Activated CD4-positive, alpha-beta memory T cell treated with anti-CD3 and anti-CD28 coated beads, Interleukin-2, amount 10 ng/mL, durations not matched to agents 7 days and 5 days (primary cell): ENCODE measurements at regions of chr17 and their contacts with region 1.

Region 1: DNA sequence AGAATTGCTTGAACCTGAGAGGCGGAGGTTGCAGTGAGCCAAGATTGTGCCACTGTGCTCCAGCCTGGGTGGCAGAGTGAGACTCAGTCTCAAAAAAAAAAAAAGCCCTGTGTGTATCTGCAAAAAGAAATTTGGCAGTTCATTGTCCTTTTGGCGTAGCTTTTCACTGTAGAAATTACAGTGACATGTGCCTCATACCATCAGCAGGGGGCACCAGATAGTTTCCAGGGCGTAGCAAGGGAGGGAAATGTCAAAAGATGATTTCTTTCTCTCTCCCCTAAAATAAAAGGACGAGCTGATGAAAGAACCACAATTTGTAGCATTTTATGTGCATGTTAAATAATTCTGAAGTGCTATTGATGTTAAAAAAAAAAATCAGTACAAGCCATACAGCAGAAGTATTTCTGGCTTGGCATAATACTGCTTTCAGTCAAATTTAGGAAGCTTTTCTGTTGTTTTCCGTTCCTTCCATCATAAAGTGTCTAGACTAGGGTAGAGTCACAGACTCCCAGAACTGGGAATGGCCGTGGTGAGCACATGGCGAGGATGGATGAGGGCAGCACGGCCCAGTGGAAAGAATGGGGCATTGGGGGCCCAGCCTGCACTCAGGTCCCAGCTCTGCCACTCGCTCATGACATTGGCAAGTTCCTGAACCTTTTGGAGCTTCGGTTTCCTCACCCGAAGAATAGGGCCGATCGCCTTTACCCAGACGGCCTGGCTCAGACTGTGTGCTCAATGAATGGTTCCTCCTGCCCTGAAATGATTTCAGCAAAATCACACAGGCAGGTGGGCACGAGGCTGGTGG is 59.8 kb upstream of the RPH3AL start:
- DNase-seq: peak; percentile 76
- H3K4me3 Mint-ChIP-seq: peak overlapping the region; percentile 80
- H3K27ac Mint-ChIP-seq: peak overlapping the region; percentile 85
- H3K4me1 Mint-ChIP-seq: peaks cover 79% of the 10 kb centered on the region
- H3K27me3 Mint-ChIP-seq: peaks cover 3% of the 10 kb centered on the region

Region 2: GRCh38 chr17:688100-688989 is 275.9 kb after region 1 on chr17:
- CTCF ChIA-PET with region 1: interaction called, 16 read pairs
- POLR2A ChIA-PET with region 1: interaction called, 5 read pairs
- DNase-seq: no peak
- H3K4me3 Mint-ChIP-seq: no peak overlapping the region
- H3K27ac Mint-ChIP-seq: no peak overlapping the region
- H3K4me1 Mint-ChIP-seq: no peaks in the 10 kb centered on the region
- H3K27me3 Mint-ChIP-seq: no peaks in the 10 kb centered on the region

Region 3: GRCh38 chr17:716238-716637 is 303.8 kb after region 1 on chr17:
- CTCF ChIA-PET with region 1: interaction called, 15 read pairs
- POLR2A ChIA-PET with region 1: interaction called, 4 read pairs
- DNase-seq: no peak
- H3K4me3 Mint-ChIP-seq: no peak overlapping the region
- H3K27ac Mint-ChIP-seq: no peak overlapping the region
- H3K4me1 Mint-ChIP-seq: peaks cover 22% of the 10 kb centered on the region
- H3K27me3 Mint-ChIP-seq: peaks cover 6% of the 10 kb centered on the region

Region 4: DNA sequence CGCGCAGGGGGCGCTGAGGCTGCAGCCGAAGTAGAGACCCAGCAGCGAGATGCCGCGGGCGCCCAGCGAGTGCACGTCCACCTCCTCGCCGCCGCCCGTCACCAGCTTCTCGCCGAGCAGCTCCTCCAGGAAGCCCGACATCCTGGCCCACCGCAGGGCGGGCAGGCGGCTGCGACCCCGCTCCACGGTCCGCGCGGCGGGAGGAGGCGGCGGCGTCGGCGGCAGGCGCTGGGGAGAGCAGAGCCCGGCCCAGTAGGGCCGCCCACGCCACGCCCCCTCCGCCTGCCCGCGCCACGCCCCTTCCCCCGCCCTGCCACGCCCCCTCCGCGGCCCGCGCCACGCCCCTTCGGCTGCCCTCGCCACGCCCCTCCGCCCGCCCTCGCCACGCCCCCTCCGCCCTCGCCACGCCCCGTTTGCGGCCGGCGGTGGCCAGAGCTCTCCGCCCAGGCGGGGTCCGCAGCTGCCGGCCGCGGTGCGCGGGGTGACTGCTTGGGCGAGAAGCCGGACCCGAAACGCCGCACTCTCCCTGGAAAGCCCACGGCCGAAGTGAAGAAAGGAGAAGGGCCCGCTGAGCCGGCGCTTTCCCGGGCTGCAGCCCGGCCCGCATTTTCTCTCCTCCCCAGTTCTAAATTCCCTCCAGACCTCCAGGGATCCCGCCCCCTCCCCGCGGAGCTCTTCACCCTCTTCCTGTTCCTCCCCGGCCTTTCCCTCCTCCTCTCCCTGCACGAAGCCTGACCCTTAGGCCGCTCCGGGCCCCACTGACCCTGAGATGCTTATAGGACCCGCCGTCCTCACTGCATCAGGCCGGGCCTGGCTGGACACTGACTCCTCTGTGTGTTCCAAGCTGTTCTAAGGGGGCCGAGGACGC is 567.4 kb after region 1 on chr17 and contains the start of gene NXN:
- CTCF ChIA-PET with region 1: interaction called, 11 read pairs
- POLR2A ChIA-PET with region 1: no interaction called
- DNase-seq: peak; percentile 88
- H3K4me3 Mint-ChIP-seq: peak within 1 kb of the TSS; percentile 67
- H3K27ac Mint-ChIP-seq: no peak within 1 kb of the TSS
- H3K4me1 Mint-ChIP-seq: peaks cover 16% of the 10 kb centered on the region
- H3K27me3 Mint-ChIP-seq: peaks cover 31% of the 10 kb centered on the region
- total RNA-seq, gene NXN: 0.23 to 0.30 TPM